ENCODE measurements at regions of chr14 and their contacts with region 1.

Region 1: DNA sequence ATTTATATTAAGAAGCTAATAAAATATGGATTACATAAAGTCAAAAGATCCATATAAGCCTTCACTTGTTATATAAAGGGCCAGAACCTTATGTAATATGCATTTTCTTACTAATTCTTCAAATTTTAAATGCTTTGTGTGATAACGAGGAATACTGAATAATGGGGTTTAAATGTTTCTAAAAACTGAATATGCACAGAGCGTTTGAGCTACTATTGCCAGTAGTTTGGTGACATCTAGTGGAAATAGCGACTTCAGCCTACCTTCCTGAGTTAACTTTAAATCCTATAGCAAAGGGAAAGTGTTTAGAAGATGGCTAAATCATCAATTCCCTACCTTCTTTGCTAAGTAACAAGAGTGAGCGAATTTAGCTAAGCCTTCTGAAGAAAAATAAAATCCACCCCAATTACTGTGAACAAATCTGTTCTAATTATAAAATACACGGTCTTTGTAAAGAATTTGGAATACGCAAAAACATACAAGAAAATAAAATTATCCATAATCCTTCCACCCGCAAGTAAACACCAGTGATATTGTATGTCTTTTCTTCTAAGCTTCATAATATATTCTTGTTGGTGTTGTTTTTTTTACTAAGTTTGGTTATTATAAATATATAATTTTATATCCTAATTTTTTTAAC is 115.5 kb upstream of the G2E3 start:
- DNase-seq: peak; percentile 3 to 46
- ATAC-seq: peak in 1 of 2 experiments; percentile 69; a peak in 2 of 6 replicates
- H3K4me3 ChIP-seq: no peak overlapping the region
- H3K27ac ChIP-seq: no peak overlapping the region
- H3K4me1 ChIP-seq: no peaks in the 10 kb centered on the region
- CTCF ChIP-seq: peak; percentile 56
- EP300 ChIP-seq: no peak
- POLR2A ChIP-seq: no peak
- RAD21 ChIP-seq: peak; percentile 68 to 74

Region 2: GRCh38 chr14:30375296-30375892 is 68.1 kb before region 1 on chr14:
- CTCF ChIA-PET with region 1: interaction called, 13 read pairs
- POLR2A ChIA-PET with region 1: no interaction called
- DNase-seq: peak; percentile 9 to 58
- ATAC-seq: peak; percentile 92 to 96
- H3K4me3 ChIP-seq: no peak overlapping the region
- H3K27ac ChIP-seq: no peak overlapping the region
- H3K4me1 ChIP-seq: no peaks in the 10 kb centered on the region
- CTCF ChIP-seq: peak; percentile 48
- EP300 ChIP-seq: no peak
- POLR2A ChIP-seq: no peak
- RAD21 ChIP-seq: peak; percentile 18 to 57; a peak in 4 of 5 replicates

Region 3: DNA sequence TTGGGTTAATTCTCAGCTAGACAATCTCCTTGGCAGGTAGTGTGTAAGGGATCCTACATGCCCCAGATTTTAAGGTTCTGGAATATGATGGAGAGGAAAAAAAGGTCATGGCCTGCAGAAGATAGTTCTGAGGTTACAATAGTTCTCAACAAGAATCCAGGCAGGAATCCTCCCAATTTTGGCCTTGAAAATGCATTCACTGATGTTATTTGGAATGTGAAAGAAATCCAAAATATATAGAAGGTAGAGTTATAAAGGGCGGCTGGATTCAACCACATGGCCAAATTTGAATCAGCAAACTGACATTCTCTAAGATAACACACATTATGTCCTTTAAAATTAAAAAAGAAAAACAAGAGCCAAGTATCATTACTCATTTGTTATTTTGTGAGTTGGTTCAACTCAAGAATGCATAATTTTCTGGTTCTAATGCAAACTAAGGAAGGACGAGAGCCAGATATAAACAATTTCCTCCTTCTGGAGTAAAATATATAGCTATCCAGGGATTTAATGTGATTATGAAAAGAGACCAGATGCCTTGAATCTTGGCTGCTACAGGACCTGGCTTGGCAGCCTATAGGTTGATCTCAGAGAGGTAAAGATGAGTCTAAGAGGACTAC is 61.5 kb before region 1 on chr14:
- CTCF ChIA-PET with region 1: interaction called, 10 read pairs
- POLR2A ChIA-PET with region 1: no interaction called
- DNase-seq: no peak
- ATAC-seq: no peak
- H3K4me3 ChIP-seq: no peak overlapping the region
- H3K27ac ChIP-seq: no peak overlapping the region
- H3K4me1 ChIP-seq: no peaks in the 10 kb centered on the region
- CTCF ChIP-seq: no peak
- EP300 ChIP-seq: no peak
- POLR2A ChIP-seq: no peak
- RAD21 ChIP-seq: no peak

Region 4: DNA sequence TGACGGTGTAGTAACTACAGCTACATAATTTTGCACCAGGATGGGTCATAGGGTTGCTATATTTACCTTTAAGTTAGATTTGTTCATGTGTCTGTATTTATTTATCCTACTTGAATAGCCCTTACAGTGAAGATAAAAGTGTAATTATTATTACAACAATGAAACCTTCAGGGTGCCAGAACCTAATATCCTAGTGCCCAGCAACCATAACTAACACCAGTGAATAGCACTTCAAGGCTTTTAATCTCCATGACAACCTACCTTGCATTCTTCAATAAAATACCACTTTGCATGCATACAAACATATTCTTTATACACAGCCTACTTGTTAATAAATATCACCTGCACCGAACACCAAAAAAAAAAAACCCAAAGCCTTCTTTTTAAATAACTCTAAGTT is 56.7 kb after region 1 on chr14:
- CTCF ChIA-PET with region 1: no interaction called
- POLR2A ChIA-PET with region 1: no interaction called
- DNase-seq: no peak
- ATAC-seq: no peak
- H3K4me3 ChIP-seq: no peak overlapping the region
- H3K27ac ChIP-seq: no peak overlapping the region
- H3K4me1 ChIP-seq: no peaks in the 10 kb centered on the region
- CTCF ChIP-seq: no peak
- EP300 ChIP-seq: no peak
- POLR2A ChIP-seq: no peak
- RAD21 ChIP-seq: no peak

Measured in A549 (cell line).